SK-N-SH (cell line): ENCODE measurements at regions of chr9 and their contacts with region 1.

Region 1: DNA sequence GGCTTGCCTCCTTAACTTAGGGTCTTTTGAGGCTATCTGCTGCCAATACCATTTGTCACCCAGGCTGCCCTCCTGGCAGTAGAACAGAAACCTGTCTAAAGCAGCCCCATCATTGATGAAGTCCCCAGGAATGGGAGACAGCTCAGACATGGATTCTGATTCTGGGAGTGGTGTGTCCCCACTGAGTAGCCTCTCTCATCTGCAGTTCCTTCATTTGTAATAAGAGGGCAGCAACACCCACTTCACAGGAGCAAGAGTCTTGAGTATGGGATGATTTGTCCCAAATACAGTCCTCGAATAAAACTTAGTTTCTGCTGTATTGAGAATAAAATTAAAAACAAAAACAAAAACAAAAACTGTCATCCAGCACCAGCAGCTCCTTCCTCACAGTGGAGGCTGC is 167.6 kb downstream of the ASTN2 start:
- DNase-seq: peak; percentile 38
- H3K4me3 ChIP-seq: no peak overlapping the region
- H3K27ac ChIP-seq: peak overlapping the region in 1 of 2 experiments; percentile 43; a peak in 2 of 4 replicates
- H3K4me1 ChIP-seq: peaks cover 0 to 22% of the 10 kb centered on the region in 2 experiments; a peak in 1 of 4 replicates
- H3K27me3 ChIP-seq: no peaks in the 10 kb centered on the region
- CTCF ChIP-seq: no peak; the same call in 1 of the 2 replicates
- EP300 ChIP-seq: no peak
- RAD21 ChIP-seq: peak; percentile 77

Region 2: DNA sequence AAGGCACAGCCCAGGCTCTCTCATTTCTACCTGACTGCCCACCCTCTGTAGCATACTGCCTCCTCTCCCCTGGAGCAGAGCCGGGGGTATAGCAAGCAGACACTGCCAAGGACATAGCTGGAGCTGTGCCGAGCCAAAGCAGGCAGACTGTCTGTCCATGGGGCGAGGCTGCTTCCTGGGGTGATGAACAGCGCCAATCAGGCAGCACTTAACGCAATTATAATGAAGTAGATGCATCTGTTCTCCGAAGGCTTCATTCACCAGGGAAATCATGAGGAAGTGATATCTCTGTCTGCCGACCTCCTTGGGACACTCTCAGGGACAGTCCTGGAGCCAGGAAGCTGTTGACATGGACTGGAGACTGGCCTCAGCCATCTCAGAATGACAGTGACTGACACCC is 63.1 kb before region 1 on chr9:
- CTCF ChIA-PET with region 1: interaction called, 10 read pairs
- POLR2A ChIA-PET with region 1: no interaction called
- DNase-seq: peak; percentile 71
- H3K4me3 ChIP-seq: no peak overlapping the region
- H3K27ac ChIP-seq: peak overlapping the region in 1 of 2 experiments; percentile 97; a peak in 2 of 4 replicates
- H3K4me1 ChIP-seq: peaks cover 0 to 38% of the 10 kb centered on the region in 2 experiments; a peak in 2 of 4 replicates
- H3K27me3 ChIP-seq: no peaks in the 10 kb centered on the region
- CTCF ChIP-seq: no peak
- EP300 ChIP-seq: peak in 1 of 2 experiments; percentile 83; a peak in 2 of 4 replicates
- RAD21 ChIP-seq: peak; percentile 47

Region 3: DNA sequence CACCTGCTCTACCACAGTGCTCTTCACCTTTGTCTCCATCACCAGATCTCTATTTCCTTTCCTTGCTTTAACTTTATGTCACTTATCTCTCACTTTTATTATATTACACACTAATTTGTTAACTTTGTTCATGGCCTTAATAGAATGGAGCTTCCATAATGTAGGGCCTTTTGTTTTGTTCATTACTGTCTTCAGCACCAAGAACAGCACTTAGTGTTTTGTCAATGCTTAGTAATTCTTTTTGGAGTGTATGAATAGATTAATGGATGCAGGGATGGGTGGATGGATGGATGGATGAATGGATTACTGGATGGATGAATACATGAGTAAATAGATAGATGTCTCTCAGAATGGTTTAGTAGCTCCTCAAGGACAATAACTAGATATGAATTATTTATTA is 20.1 kb before region 1 on chr9:
- CTCF ChIA-PET with region 1: interaction called, 39 read pairs
- POLR2A ChIA-PET with region 1: no interaction called
- DNase-seq: no peak
- H3K4me3 ChIP-seq: no peak overlapping the region
- H3K27ac ChIP-seq: no peak overlapping the region
- H3K4me1 ChIP-seq: peaks cover 0 to under 1% of the 10 kb centered on the region in 2 experiments; a peak in 1 of 4 replicates
- H3K27me3 ChIP-seq: no peaks in the 10 kb centered on the region
- CTCF ChIP-seq: no peak
- EP300 ChIP-seq: no peak
- RAD21 ChIP-seq: no peak

Region 4: DNA sequence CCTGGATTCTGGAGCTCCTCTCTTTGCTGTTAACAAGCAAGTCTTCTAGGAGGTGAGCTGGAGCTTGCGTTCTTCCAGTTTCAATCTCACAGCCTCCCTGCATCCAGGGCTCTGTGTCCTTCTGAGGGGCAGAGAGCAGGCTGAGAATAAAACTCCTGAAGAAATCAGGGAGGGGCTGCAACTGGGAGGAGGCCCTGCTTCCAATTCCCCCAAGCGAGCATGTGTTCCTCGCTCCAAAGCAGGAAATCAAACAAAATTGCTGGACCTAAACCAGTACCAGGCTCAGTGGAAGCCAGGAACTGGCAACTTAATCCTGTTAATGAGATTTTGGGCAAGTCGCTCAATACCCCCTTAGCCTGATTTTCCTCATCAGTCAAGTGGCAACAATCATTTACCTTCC is 14.2 kb before region 1 on chr9:
- CTCF ChIA-PET with region 1: interaction called, 39 read pairs
- POLR2A ChIA-PET with region 1: no interaction called
- DNase-seq: no peak
- H3K4me3 ChIP-seq: no peak overlapping the region
- H3K27ac ChIP-seq: no peak overlapping the region
- H3K4me1 ChIP-seq: peaks cover 0 to 13% of the 10 kb centered on the region in 2 experiments; a peak in 2 of 4 replicates
- H3K27me3 ChIP-seq: no peaks in the 10 kb centered on the region
- CTCF ChIP-seq: no peak
- EP300 ChIP-seq: no peak
- RAD21 ChIP-seq: no peak

Region 5: GRCh38 chr9:117258184-117258866 is 11.1 kb after region 1 on chr9:
- CTCF ChIA-PET with region 1: interaction called, 12 read pairs
- POLR2A ChIA-PET with region 1: no interaction called
- DNase-seq: no peak
- H3K4me3 ChIP-seq: no peak overlapping the region
- H3K27ac ChIP-seq: no peak overlapping the region
- H3K4me1 ChIP-seq: peaks cover 0 to 8% of the 10 kb centered on the region in 2 experiments; a peak in 1 of 4 replicates
- H3K27me3 ChIP-seq: no peaks in the 10 kb centered on the region
- CTCF ChIP-seq: no peak
- EP300 ChIP-seq: no peak
- RAD21 ChIP-seq: no peak